Breast epithelium (tissue), 4 donors: ENCODE measurements at regions of chr6 and their contacts with region 1.

Region 1: GRCh38 chr6:23910420-23910819 is 215.6 kb upstream of the NRSN1 start:
- DNase-seq: no peak
- H3K4me3 ChIP-seq: no peak overlapping the region
- H3K27ac ChIP-seq: no peak overlapping the region
- H3K4me1 ChIP-seq: no peaks in the 10 kb centered on the region
- H3K27me3 ChIP-seq: no peaks in the 10 kb centered on the region
- CTCF ChIP-seq: no peak
- POLR2A ChIP-seq: no peak

Region 2: GRCh38 chr6:23964865-23965264 is 54.4 kb after region 1 on chr6:
- intact Hi-C with region 1: loop called (anchors 5 kb)
- DNase-seq: no peak
- H3K4me3 ChIP-seq: no peak overlapping the region
- H3K27ac ChIP-seq: no peak overlapping the region
- H3K4me1 ChIP-seq: no peaks in the 10 kb centered on the region
- H3K27me3 ChIP-seq: no peaks in the 10 kb centered on the region
- CTCF ChIP-seq: no peak
- POLR2A ChIP-seq: no peak

Region 3: GRCh38 chr6:25670208-25670607 is 1759.8 kb after region 1 on chr6:
- intact Hi-C with region 1: no loop called
- DNase-seq: no peak
- H3K4me3 ChIP-seq: no peak overlapping the region
- H3K27ac ChIP-seq: no peak overlapping the region
- H3K4me1 ChIP-seq: no peaks in the 10 kb centered on the region
- H3K27me3 ChIP-seq: no peaks in the 10 kb centered on the region
- CTCF ChIP-seq: no peak
- POLR2A ChIP-seq: no peak